ENCODE measurements at regions of chr14 and their contacts with region 1.

Region 1: GRCh38 chr14:73173092-73173735 is 36.9 kb downstream of the PSEN1 start:
- DNase-seq: no peak
- H3K4me3 Mint-ChIP-seq: no peak overlapping the region
- H3K27ac Mint-ChIP-seq: no peak overlapping the region
- H3K4me1 Mint-ChIP-seq: peaks cover 2% of the 10 kb centered on the region
- H3K27me3 Mint-ChIP-seq: no peaks in the 10 kb centered on the region

Region 2: DNA sequence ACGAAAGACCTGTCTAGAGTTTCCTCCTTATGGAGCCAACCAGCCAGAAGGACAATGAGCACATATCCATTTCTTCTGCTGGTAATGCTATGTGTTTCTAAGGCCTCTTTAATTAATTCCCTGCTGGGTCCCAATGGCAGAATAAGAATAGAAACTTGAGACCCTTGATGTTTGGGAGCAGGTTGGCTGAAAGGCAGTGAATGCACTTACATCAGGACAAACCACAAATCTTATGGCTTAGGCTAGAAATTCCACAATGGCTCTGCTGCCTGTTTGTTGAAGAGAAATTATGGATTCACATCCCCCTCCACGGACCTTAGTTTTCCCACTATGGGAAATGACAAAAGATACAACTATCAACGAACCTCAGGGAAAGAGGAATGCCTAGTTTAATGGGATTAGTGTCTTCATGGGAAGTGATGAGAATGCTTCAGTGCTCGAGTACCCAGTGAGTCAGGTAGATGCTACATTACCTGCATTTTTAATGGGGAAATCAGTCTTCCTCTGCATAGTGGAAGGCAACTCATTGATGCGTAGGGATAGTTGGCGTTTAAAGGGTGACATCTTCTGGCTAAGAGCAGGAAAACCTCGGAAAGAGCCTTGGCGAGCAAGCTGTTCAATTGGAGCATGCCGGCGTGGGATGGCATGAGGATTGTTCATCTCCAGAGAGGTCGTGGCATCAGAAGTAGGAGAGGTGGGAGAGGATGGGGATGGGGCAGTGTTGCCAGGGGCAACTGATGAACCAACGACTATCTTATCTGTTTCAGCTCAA is 110.6 kb after region 1 on chr14:
- CTCF ChIA-PET with region 1: interaction called, 3 read pairs
- intact Hi-C with region 1: loop called (anchors 10 kb)
- DNase-seq: no peak
- H3K4me3 Mint-ChIP-seq: no peak overlapping the region
- H3K27ac Mint-ChIP-seq: no peak overlapping the region
- H3K4me1 Mint-ChIP-seq: no peaks in the 10 kb centered on the region
- H3K27me3 Mint-ChIP-seq: no peaks in the 10 kb centered on the region

Region 3: DNA sequence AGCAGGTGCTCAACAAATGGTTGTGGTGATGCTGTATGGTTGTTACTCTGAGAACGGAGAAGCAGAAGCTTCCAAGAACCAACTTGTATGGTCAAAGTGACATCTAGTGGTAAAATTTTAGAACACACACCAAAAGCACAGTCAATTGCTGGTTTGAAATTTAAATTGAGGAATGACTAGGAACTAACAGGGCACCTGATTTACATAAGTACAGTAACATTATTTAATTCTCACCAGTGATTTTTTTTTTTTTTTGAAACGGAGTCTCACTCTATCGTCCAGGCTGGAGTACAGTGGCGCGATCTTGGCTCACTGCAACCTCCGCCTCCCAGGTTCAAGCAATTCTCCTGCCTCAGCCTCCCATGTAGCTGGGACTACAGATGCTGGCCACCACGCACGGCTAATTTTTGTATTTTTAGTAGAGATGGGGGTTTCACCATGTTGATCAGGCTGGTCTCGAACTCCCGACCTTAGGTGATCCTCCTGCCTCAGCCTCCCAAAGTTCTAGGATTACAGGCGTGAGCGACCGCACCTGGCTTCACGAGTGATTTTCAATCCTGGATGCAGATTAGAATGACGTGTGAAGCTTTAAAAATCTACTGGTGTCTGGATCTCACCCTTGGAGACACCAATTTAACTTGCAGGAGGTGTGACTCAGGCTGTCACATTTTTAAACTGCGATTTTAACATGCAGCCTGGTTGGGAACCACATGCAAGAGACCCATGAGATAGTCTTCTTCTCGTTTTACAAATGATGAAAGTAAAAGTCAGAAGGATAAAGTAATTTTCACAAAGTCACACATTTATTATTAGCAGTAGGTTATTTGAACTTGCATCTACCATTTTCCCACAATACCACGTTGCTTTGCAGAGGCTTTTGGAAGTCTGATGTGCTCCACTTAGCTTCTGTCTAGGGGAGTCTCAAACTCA is 299.2 kb after region 1 on chr14:
- CTCF ChIA-PET with region 1: interaction called, 13 read pairs
- intact Hi-C with region 1: loop called (anchors 1 kb)
- DNase-seq: no peak
- H3K4me3 Mint-ChIP-seq: no peak overlapping the region
- H3K27ac Mint-ChIP-seq: no peak overlapping the region
- H3K4me1 Mint-ChIP-seq: peaks cover 9% of the 10 kb centered on the region
- H3K27me3 Mint-ChIP-seq: no peaks in the 10 kb centered on the region

Measured in activated naive CD4-positive, alpha-beta T cell treated with anti-CD3 and anti-CD28 coated beads for 36 hours (primary cell).